PC-9 (cell line): ENCODE measurements at regions of chr10 and their contacts with region 1.

Region 1: DNA sequence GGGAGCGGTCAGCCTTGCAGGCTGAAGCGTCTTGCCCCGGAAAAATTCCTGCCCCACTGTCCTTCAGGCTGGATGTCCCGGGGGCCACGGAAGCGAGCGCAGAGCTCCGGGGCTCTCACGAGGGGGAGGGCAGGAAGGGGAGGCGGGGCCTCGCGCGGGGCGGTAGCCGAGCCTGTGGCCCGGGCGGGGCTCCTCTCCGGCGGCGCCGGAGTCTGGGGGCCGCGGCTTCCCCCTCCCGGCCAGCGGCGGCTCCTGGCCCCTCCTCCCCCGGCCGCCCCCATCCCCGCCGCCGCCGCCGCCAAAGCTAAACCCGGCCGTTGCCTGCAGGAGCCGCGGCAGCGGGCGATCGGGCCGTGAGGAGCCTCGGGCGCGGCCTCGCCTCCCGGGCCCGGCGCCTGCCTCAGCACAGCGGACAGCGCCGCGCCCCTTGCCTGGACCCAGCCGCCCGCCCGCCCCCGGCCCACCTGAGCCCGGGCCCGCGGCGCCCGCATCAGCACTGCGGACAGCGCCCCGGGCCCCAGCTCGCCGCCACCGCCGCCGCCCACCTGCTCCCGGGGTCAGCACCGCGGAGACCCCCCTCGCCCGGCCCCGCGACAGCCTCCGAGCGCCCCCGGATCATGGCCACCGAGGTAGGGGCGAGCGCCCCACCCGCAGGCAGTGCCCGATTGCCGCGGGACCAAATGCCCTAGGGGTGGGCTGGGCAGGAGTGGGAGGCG is at the start of gene GOLGA7B:
- DNase-seq: peak in 1 of 2 experiments; percentile 58
- H3K4me3 ChIP-seq: peak within 1 kb of the TSS; percentile 63
- H3K27ac ChIP-seq: peak within 1 kb of the TSS; percentile 79
- H3K4me1 ChIP-seq: peaks cover 42% of the 10 kb centered on the region
- H3K27me3 ChIP-seq: no peaks in the 10 kb centered on the region
- CTCF ChIP-seq: no peak
- total RNA-seq, gene GOLGA7B: 0.90 and 1.1 TPM in 2 replicates

Region 2: GRCh38 chr10:97701438-97702069 is 148.3 kb before region 1 on chr10:
- CTCF ChIA-PET with region 1: no interaction called
- POLR2A ChIA-PET with region 1: interaction called, 27 read pairs
- intact Hi-C with region 1: no loop called
- DNase-seq: peak in 1 of 2 experiments; percentile 29
- H3K4me3 ChIP-seq: no peak overlapping the region
- H3K27ac ChIP-seq: no peak overlapping the region
- H3K4me1 ChIP-seq: no peaks in the 10 kb centered on the region
- H3K27me3 ChIP-seq: no peaks in the 10 kb centered on the region
- CTCF ChIP-seq: peak; percentile 74

Region 3: DNA sequence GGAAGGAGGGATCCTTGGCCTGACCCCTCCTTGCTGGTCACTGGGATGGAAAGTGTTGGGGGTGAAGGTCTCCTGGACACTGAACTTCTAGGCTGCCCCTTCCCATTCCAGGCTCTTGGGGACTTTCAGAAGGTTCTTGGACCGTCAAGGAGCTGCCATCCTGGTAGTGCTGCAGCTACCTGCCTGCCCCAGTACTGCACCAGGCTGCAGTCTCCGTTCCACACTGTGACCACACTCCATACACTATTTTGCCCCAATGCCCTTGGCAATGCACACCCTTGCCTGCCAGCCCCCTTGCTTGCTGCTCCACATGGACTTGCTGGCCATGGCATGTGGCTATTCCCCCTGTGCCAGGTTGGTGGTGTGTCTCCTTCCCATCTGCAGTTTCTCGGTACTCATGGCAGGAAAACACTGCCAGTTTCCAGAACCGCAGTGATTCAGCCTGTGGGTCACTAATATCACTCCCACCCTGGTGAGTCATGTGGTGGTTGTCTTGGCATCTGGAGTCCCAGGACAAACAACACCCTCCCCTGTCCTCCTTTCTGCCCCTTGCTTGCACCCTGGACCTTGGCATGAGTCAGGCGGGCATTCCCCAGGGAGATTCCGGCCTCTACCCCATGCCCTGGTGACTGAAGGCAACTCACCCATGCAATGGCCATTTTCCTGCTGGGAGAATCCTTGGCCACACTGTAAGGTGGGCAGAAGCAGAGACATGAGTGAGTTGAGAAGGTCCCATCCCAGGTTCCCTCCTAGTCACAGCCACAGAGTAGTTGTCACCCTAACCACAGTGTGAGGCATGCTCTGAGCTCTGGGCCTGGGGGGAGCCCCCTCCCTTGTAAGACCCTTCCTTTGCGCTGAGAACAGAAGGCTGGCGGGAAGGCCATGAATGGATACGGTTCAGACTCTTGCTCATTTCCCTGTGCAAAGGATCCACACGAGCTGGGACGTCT is 32.6 kb after region 1 on chr10:
- CTCF ChIA-PET with region 1: no interaction called
- POLR2A ChIA-PET with region 1: interaction called, 6 read pairs
- intact Hi-C with region 1: loop called (anchors 2 kb)
- DNase-seq: peak; percentile 85 to 94
- H3K4me3 ChIP-seq: no peak overlapping the region
- H3K27ac ChIP-seq: peak overlapping the region; percentile 54
- H3K4me1 ChIP-seq: peaks cover 45% of the 10 kb centered on the region
- H3K27me3 ChIP-seq: no peaks in the 10 kb centered on the region
- CTCF ChIP-seq: no peak